CD8-positive, alpha-beta T cell (primary cell): ENCODE measurements at regions of chr10 and their contacts with region 1.

Region 1: GRCh38 chr10:4656576-4657182 is 169.3 kb upstream of the AKR1E2 start:
- DNase-seq: peak in 8 of 9 experiments; percentile 26 to 69 (median 44)
- ATAC-seq: peak; percentile 49
- H3K4me3 ChIP-seq: no peak overlapping the region
- H3K4me3 Mint-ChIP-seq: no peak overlapping the region
- H3K27ac ChIP-seq: no peak overlapping the region
- H3K27ac Mint-ChIP-seq: no peak overlapping the region
- H3K4me1 ChIP-seq: no peaks in the 10 kb centered on the region
- H3K4me1 Mint-ChIP-seq: no peaks in the 10 kb centered on the region
- H3K27me3 ChIP-seq: no peaks in the 10 kb centered on the region
- H3K27me3 Mint-ChIP-seq: peaks cover 11% of the 10 kb centered on the region
- CTCF ChIP-seq: peak; percentile 97

Region 2: GRCh38 chr10:3197348-3198003 is 1459.2 kb before region 1 on chr10:
- CTCF ChIA-PET with region 1: interaction called, 21 read pairs
- POLR2A ChIA-PET with region 1: no interaction called
- intact Hi-C with region 1: loop called (anchors 1 to 2 kb)
- DNase-seq: peak; percentile 15 to 83 (median 68)
- ATAC-seq: peak; percentile 90
- H3K4me3 ChIP-seq: peak overlapping the region; percentile 26 to 37
- H3K4me3 Mint-ChIP-seq: peak overlapping the region; percentile 79
- H3K27ac ChIP-seq: no peak overlapping the region
- H3K27ac Mint-ChIP-seq: peak overlapping the region; percentile 66
- H3K4me1 ChIP-seq: peaks cover 12% of the 10 kb centered on the region
- H3K4me1 Mint-ChIP-seq: peaks cover 19% of the 10 kb centered on the region
- H3K27me3 ChIP-seq: peaks cover 0 to 8% of the 10 kb centered on the region in 2 experiments
- H3K27me3 Mint-ChIP-seq: peaks cover 31% of the 10 kb centered on the region
- CTCF ChIP-seq: peak; percentile 57

Region 3: GRCh38 chr10:3239066-3239919 is 1417.4 kb before region 1 on chr10:
- CTCF ChIA-PET with region 1: interaction called, 64 read pairs
- POLR2A ChIA-PET with region 1: no interaction called
- intact Hi-C with region 1: loop called (anchors 1 kb)
- DNase-seq: peak; percentile 38 to 80 (median 73)
- ATAC-seq: peak; percentile 73
- H3K4me3 ChIP-seq: no peak overlapping the region
- H3K4me3 Mint-ChIP-seq: no peak overlapping the region
- H3K27ac ChIP-seq: no peak overlapping the region
- H3K27ac Mint-ChIP-seq: no peak overlapping the region
- H3K4me1 ChIP-seq: no peaks in the 10 kb centered on the region
- H3K4me1 Mint-ChIP-seq: peaks cover 4% of the 10 kb centered on the region
- H3K27me3 ChIP-seq: peaks cover 0 to 9% of the 10 kb centered on the region in 2 experiments
- H3K27me3 Mint-ChIP-seq: peaks cover 18% of the 10 kb centered on the region
- CTCF ChIP-seq: peak; percentile 92

Region 4: DNA sequence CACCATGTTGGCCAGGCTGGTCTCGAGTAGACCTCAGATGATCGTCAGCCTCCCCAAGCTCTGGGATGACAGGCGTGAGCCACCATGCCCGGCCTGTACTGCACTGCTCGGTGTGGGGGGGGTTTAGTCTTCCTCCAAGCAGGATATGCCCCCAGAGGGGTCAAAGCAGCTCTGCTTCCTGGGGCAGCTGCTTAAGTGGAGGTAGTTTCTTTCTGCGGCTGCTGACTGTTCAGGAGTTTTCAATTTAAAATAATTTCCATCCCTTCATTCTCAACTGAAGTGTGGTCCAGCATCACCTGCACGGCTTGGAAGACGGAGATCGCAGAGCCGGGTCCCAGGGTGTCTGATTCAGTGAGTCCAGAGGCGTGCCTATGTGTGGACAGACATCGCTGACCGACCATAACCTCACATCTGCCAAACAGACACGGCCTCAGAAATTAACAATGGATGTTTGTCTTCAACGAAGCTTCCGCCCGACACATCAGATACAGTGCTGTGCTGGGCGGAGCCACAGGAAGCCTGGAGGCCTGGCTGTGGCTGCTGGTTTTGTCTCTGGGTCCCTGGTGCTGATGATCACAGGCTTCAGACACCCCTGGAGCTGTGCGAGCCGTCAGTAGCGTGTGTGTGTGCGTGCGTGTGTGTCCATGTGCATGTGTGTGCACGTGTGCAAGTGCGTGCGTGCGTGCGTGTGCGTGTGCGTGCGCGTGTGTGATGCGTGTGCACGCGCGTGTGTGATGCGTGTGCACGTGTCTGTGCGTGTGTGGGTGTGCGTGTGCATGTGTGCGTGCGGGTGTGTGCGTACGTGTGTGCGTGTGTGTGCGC is 1257.6 kb before region 1 on chr10:
- CTCF ChIA-PET with region 1: no interaction called
- POLR2A ChIA-PET with region 1: no interaction called
- intact Hi-C with region 1: loop called in 1 of 2 experiments (anchors 10 kb)
- DNase-seq: peak in 1 of 9 experiments; percentile 31
- ATAC-seq: no peak
- H3K4me3 ChIP-seq: no peak overlapping the region
- H3K4me3 Mint-ChIP-seq: no peak overlapping the region
- H3K27ac ChIP-seq: no peak overlapping the region
- H3K27ac Mint-ChIP-seq: no peak overlapping the region
- H3K4me1 ChIP-seq: no peaks in the 10 kb centered on the region
- H3K4me1 Mint-ChIP-seq: no peaks in the 10 kb centered on the region
- H3K27me3 ChIP-seq: no peaks in the 10 kb centered on the region
- H3K27me3 Mint-ChIP-seq: no peaks in the 10 kb centered on the region
- CTCF ChIP-seq: no peak

Region 5: GRCh38 chr10:3735175-3735574 is 921.5 kb before region 1 on chr10:
- CTCF ChIA-PET with region 1: no interaction called
- POLR2A ChIA-PET with region 1: no interaction called
- intact Hi-C with region 1: loop called in 1 of 2 experiments (anchors 2 kb)
- DNase-seq: peak in 4 of 9 experiments; percentile 9 to 46 (median 32)
- ATAC-seq: no peak
- H3K4me3 ChIP-seq: no peak overlapping the region
- H3K4me3 Mint-ChIP-seq: no peak overlapping the region
- H3K27ac ChIP-seq: no peak overlapping the region
- H3K27ac Mint-ChIP-seq: no peak overlapping the region
- H3K4me1 ChIP-seq: no peaks in the 10 kb centered on the region
- H3K4me1 Mint-ChIP-seq: peaks cover 3% of the 10 kb centered on the region
- H3K27me3 ChIP-seq: no peaks in the 10 kb centered on the region
- H3K27me3 Mint-ChIP-seq: no peaks in the 10 kb centered on the region
- CTCF ChIP-seq: no peak